CD8-positive, alpha-beta T cell (primary cell): ENCODE measurements at regions of chr14 and their contacts with region 1.

Region 1: DNA sequence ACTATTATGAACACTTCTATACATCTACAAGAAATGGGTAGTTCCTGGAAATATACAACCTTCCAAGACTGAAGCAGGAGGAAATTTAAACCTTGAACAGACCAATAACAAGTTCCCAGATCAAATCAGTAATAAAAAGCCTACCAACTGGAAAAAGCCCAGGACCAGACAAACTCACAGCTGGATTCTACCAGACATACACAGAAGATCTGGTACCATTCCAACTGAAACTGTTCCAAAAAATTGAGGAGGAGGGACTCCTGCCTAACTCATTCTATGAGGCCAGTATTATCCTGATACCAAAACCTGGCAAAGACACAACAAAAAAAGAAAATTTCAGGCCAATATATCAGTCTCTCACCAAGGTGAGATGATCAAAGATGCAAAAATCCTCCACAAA is 189.4 kb downstream of the RPS29 start:
- DNase-seq: no peak
- ATAC-seq: no peak
- H3K4me3 ChIP-seq: no peak overlapping the region
- H3K4me3 Mint-ChIP-seq: no peak overlapping the region
- H3K27ac ChIP-seq: no peak overlapping the region
- H3K27ac Mint-ChIP-seq: no peak overlapping the region
- H3K4me1 ChIP-seq: no peaks in the 10 kb centered on the region
- H3K4me1 Mint-ChIP-seq: no peaks in the 10 kb centered on the region
- H3K27me3 ChIP-seq: no peaks in the 10 kb centered on the region
- H3K27me3 Mint-ChIP-seq: peaks cover 13% of the 10 kb centered on the region
- CTCF ChIP-seq: no peak

Region 2: DNA sequence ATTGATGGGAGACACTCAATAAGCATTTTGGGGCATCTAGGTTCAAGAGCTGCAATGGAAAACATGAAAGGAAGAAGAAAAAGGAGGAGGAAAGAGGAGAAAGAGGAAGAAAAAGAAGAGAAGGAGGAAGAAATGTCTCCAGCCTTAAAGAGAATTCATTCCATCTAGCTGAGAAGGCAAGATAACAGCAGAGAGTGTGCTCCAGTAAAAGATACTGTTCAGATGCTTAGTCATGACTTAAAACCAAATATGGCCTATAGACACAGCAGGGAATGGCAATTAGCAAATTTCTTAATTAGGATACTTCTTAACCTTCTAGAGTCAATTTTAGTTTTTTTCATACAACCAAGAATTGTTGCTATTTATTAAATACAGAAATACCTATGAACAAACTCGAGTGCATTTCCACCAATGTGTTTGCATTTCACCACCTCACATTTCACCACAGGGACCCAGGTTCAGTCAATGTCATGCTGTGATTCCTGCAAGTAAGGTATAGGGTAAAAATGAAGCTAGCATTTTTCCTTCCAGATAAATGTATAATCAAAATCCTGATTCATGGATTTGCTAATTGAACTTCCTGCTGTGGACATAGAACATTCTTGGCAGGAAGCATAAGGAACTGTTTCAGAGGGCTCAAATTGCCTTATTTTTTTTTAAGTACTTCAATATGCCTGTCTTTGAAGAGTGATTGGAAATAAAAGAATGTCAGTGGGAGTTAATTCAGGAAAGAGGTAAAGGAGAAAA is 11.6 kb after region 1 on chr14:
- CTCF ChIA-PET with region 1: no interaction called
- POLR2A ChIA-PET with region 1: no interaction called
- intact Hi-C with region 1: loop called in 1 of 2 experiments (anchors 1 kb)
- DNase-seq: no peak
- ATAC-seq: no peak
- H3K4me3 ChIP-seq: no peak overlapping the region
- H3K4me3 Mint-ChIP-seq: no peak overlapping the region
- H3K27ac ChIP-seq: no peak overlapping the region
- H3K27ac Mint-ChIP-seq: no peak overlapping the region
- H3K4me1 ChIP-seq: no peaks in the 10 kb centered on the region
- H3K4me1 Mint-ChIP-seq: no peaks in the 10 kb centered on the region
- H3K27me3 ChIP-seq: peaks cover 0 to 2% of the 10 kb centered on the region in 2 experiments
- H3K27me3 Mint-ChIP-seq: peaks cover 27% of the 10 kb centered on the region
- CTCF ChIP-seq: no peak